GM23248 (cell line): ENCODE measurements at regions of chr1 and their contacts with region 1.

Region 1: GRCh38 chr1:204941421-204942338 is 71.0 kb downstream of the NFASC start:
- DNase-seq: peak; percentile 78
- H3K4me3 ChIP-seq: no peak overlapping the region
- H3K27ac ChIP-seq: no peak overlapping the region
- H3K4me1 ChIP-seq: peaks cover 12% of the 10 kb centered on the region; the same call in 1 of the 2 replicates
- H3K27me3 ChIP-seq: no peaks in the 10 kb centered on the region

Region 2: DNA sequence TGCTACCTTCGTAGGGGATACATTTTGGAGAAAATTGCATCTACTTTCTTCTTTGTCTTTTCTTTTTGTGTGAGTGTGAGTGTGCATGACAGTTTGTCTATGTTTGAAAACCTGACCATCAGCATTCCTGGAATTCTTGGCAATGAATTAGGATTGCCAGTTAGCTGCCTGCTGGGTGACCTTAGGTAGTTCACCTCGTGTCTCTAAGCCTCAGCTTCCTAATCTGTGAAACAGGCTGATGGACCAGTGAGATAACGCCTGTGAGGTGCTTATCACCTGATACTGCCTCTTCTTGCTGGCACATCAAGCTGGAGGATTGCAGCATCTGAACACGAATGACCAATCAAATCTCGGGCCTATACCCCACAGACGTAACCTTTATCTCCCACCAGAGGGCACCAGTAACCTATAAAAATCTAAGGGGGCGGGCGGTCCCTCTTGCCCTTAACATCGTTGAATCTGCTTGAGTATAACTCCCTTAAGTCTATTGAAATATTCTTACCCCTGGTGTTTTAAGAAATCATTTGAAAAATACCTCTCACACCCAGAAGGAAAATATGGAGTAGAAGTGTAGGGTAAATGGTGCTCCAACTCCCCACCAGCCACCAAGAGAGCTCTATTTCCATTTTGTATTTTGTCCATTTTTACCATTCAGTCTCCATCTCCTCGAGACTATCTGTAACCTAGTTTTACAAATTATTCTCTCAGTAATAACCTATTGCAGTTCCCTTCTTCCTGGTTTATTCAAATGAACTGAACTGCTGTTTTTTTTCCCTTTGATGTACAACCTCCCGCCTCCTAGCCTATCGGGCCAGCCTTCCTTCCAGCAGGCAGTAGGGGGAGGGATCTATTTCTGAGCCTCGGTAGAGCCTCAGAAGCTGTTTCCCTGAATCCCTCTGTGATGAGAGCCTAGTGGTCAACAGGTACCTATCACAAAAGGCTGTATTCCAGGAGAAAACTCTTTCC is 375.8 kb before region 1 on chr1:
- in situ Hi-C with region 1: loop called (anchors 10 kb)
- DNase-seq: peak; percentile 86
- H3K4me3 ChIP-seq: no peak overlapping the region
- H3K27ac ChIP-seq: no peak overlapping the region
- H3K4me1 ChIP-seq: peaks cover 5% of the 10 kb centered on the region
- H3K27me3 ChIP-seq: no peaks in the 10 kb centered on the region

Region 3: GRCh38 chr1:205088341-205088740 is 146.7 kb after region 1 on chr1:
- in situ Hi-C with region 1: no loop called
- DNase-seq: peak; percentile 60
- H3K4me3 ChIP-seq: no peak overlapping the region
- H3K27ac ChIP-seq: peak overlapping the region; percentile 47
- H3K4me1 ChIP-seq: peaks cover 17% of the 10 kb centered on the region
- H3K27me3 ChIP-seq: no peaks in the 10 kb centered on the region